CD14-positive monocyte (primary cell): ENCODE measurements at regions of chr11 and their contacts with region 1.

Region 1: GRCh38 chr11:406978-407739 is 7.6 kb downstream of the SIGIRR start:
- DNase-seq: peak; percentile 76 to 90 (median 87)
- H3K4me3 ChIP-seq: peak overlapping the region; percentile 25 to 75 (median 48)
- H3K4me3 Mint-ChIP-seq: peak overlapping the region; percentile 31 to 59
- H3K27ac ChIP-seq: peak overlapping the region; percentile 25 to 73
- H3K27ac Mint-ChIP-seq: peak overlapping the region in 4 of 7 donors; percentile 32 to 41 (median 38)
- H3K4me1 ChIP-seq: peaks cover 15 to 21% of the 10 kb centered on the region in 2 donors
- H3K4me1 Mint-ChIP-seq: peaks cover 7% of the 10 kb centered on the region
- H3K27me3 ChIP-seq: no peaks in the 10 kb centered on the region
- H3K27me3 Mint-ChIP-seq: peaks cover 0 to 12% (median 1%) of the 10 kb centered on the region in 3 donors
- CTCF ChIP-seq: no peak

Region 2: DNA sequence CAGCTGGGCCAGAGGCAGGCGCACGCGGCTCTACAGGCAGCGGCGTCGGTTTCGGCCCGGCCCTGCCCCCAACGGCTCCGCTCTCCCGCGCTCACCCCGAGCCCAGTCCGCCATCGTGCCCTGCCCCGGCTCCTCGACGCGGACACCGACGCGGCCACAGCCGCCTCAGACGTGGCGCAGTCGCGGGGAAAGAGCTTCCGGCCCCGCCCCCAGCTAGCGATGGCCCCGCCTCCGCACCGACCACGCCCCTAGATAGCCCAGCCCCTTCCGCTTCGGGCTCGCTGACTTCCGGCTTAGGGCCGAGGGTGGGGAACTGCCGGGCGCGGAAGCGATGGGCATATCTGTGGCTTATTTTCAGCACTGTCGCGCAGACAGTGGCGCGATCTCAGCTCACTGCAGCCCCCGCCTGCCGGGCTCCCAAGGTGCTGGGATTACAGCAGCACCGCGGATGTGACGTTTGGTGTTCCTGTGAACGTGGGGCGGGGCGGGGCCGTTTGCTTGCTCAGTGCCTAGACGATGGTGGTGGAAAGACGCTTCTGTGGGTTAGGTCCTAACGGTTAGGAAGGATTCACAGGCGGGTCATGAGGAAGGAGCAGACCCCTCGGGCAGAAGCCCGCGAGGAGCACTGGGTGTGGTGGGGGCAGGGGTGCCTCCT is 199.8 kb before region 1 on chr11 and contains the starts of genes BET1L and RIC8A:
- intact Hi-C with region 1: loop called in 1 of 2 experiments (anchors 2 kb)
- DNase-seq: peak; percentile 98 to 99 (median 99)
- H3K4me3 ChIP-seq: peak within 1 kb of the TSS; percentile 78 to 98 (median 81)
- H3K4me3 Mint-ChIP-seq: peak within 1 kb of the TSS; percentile 97 to 98
- H3K27ac ChIP-seq: peak within 1 kb of the TSS; percentile 98 to 100
- H3K27ac Mint-ChIP-seq: peak within 1 kb of the TSS; percentile 99 to 100 (median 100)
- H3K4me1 ChIP-seq: peaks cover 39 to 59% of the 10 kb centered on the region in 2 donors
- H3K4me1 Mint-ChIP-seq: peaks cover 53% of the 10 kb centered on the region
- H3K27me3 ChIP-seq: no peaks in the 10 kb centered on the region
- H3K27me3 Mint-ChIP-seq: peaks cover 2 to 5% (median 4%) of the 10 kb centered on the region in 3 donors
- CTCF ChIP-seq: no peak
- polyA plus RNA-seq, gene BET1L: 9.5 to 37.3 (median 29.3) TPM
- polyA plus RNA-seq, gene RIC8A: 51.1 to 79.1 (median 56.5) TPM

Region 3: GRCh38 chr11:447923-448731 is 41.0 kb after region 1 on chr11:
- intact Hi-C with region 1: loop called (anchors 2 to 5 kb)
- DNase-seq: peak; percentile 85 to 88 (median 88)
- H3K4me3 ChIP-seq: peak overlapping the region; percentile 55 to 77 (median 68)
- H3K4me3 Mint-ChIP-seq: peak overlapping the region; percentile 82 to 90
- H3K27ac ChIP-seq: peak overlapping the region; percentile 82 to 84
- H3K27ac Mint-ChIP-seq: peak overlapping the region; percentile 93 to 98 (median 97)
- H3K4me1 ChIP-seq: peaks cover 27 to 34% of the 10 kb centered on the region in 2 donors
- H3K4me1 Mint-ChIP-seq: peaks cover 20% of the 10 kb centered on the region
- H3K27me3 ChIP-seq: peaks cover 0 to 5% of the 10 kb centered on the region in 2 donors
- H3K27me3 Mint-ChIP-seq: peaks cover 11 to 19% (median 12%) of the 10 kb centered on the region in 3 donors
- CTCF ChIP-seq: peak; percentile 85